Activated CD4-positive, alpha-beta T cell treated with anti-CD3 and anti-CD28 coated beads, Interleukin-2, amount 10 ng/mL, durations not matched to agents 7 days and 5 days (primary cell): ENCODE measurements at regions of chr1 and their contacts with region 1.

Region 1: DNA sequence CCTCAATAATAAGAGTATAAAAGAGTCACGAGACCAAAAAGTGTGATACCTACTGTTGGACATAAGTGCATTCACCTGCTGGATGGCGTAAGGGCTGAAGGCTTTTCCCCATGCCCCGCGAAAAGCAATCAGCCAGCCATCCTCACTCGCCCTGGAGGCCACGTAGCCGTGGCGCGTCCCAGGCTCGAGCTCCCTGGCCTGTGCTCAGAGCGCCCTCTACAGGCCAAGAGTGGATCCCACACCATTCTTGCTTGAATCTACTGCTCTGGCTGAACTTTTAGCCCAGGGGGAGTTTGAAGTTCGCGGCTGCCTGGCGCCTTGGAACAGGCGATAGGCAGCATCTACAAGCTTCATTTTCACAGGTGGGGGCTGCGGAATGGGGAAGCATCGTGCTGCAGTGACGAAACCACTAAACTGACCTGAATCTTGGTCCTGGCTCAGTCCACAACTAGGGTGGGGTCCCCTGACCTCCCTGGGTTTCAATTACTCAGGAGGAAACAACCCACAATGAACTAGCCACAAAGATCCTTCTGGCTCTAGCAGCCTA is 70.3 kb upstream of the SERBP1 start:
- DNase-seq: peak; percentile 90
- H3K4me3 Mint-ChIP-seq: no peak overlapping the region
- H3K27ac Mint-ChIP-seq: no peak overlapping the region
- H3K4me1 Mint-ChIP-seq: peaks cover 4% of the 10 kb centered on the region
- H3K27me3 Mint-ChIP-seq: peaks cover 7% of the 10 kb centered on the region

Region 2: GRCh38 chr1:67230539-67230938 is 269.9 kb before region 1 on chr1:
- CTCF ChIA-PET with region 1: interaction called, 11 read pairs
- POLR2A ChIA-PET with region 1: no interaction called
- DNase-seq: no peak
- H3K4me3 Mint-ChIP-seq: no peak overlapping the region
- H3K27ac Mint-ChIP-seq: no peak overlapping the region
- H3K4me1 Mint-ChIP-seq: peaks cover 13% of the 10 kb centered on the region
- H3K27me3 Mint-ChIP-seq: no peaks in the 10 kb centered on the region

Region 3: DNA sequence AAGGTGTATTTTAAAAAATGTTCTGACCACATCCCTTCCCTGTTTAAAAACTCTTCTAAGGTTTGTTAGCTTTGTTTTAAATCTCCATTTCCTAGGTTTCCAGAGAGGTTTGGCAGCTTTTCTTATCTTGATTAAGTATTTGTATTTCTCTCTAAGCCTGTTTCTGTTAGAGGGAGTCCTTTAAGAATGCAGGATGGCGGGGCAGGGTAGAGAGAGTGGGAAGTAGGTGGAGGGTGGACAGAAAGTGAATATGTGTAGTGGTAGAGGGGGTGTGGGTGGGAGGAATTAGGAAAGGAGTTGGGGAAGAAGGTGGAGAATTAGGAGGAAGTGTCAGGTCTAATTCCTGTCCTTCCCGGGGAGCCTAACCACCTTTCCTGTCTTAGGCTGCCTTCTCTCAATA is 49.1 kb before region 1 on chr1:
- CTCF ChIA-PET with region 1: no interaction called
- POLR2A ChIA-PET with region 1: no interaction called
- DNase-seq: no peak
- H3K4me3 Mint-ChIP-seq: no peak overlapping the region
- H3K27ac Mint-ChIP-seq: no peak overlapping the region
- H3K4me1 Mint-ChIP-seq: peaks cover 4% of the 10 kb centered on the region
- H3K27me3 Mint-ChIP-seq: peaks cover 4% of the 10 kb centered on the region

Region 4: GRCh38 chr1:67489643-67490042 is 10.8 kb before region 1 on chr1:
- CTCF ChIA-PET with region 1: interaction called, 19 read pairs
- POLR2A ChIA-PET with region 1: interaction called, 3 read pairs
- DNase-seq: no peak
- H3K4me3 Mint-ChIP-seq: no peak overlapping the region
- H3K27ac Mint-ChIP-seq: no peak overlapping the region
- H3K4me1 Mint-ChIP-seq: no peaks in the 10 kb centered on the region
- H3K27me3 Mint-ChIP-seq: no peaks in the 10 kb centered on the region

Region 5: GRCh38 chr1:67515324-67516080 is 15.0 kb after region 1 on chr1:
- CTCF ChIA-PET with region 1: interaction called, 18 read pairs
- POLR2A ChIA-PET with region 1: no interaction called
- DNase-seq: no peak
- H3K4me3 Mint-ChIP-seq: no peak overlapping the region
- H3K27ac Mint-ChIP-seq: no peak overlapping the region
- H3K4me1 Mint-ChIP-seq: no peaks in the 10 kb centered on the region
- H3K27me3 Mint-ChIP-seq: no peaks in the 10 kb centered on the region

Region 6: GRCh38 chr1:67683766-67684525 is 183.5 kb after region 1 on chr1:
- CTCF ChIA-PET with region 1: no interaction called
- POLR2A ChIA-PET with region 1: no interaction called
- DNase-seq: no peak
- H3K4me3 Mint-ChIP-seq: peak overlapping the region; percentile 97
- H3K27ac Mint-ChIP-seq: no peak overlapping the region
- H3K4me1 Mint-ChIP-seq: peaks cover 39% of the 10 kb centered on the region
- H3K27me3 Mint-ChIP-seq: no peaks in the 10 kb centered on the region